ENCODE measurements at regions of chr7 and their contacts with region 1.

Region 1: DNA sequence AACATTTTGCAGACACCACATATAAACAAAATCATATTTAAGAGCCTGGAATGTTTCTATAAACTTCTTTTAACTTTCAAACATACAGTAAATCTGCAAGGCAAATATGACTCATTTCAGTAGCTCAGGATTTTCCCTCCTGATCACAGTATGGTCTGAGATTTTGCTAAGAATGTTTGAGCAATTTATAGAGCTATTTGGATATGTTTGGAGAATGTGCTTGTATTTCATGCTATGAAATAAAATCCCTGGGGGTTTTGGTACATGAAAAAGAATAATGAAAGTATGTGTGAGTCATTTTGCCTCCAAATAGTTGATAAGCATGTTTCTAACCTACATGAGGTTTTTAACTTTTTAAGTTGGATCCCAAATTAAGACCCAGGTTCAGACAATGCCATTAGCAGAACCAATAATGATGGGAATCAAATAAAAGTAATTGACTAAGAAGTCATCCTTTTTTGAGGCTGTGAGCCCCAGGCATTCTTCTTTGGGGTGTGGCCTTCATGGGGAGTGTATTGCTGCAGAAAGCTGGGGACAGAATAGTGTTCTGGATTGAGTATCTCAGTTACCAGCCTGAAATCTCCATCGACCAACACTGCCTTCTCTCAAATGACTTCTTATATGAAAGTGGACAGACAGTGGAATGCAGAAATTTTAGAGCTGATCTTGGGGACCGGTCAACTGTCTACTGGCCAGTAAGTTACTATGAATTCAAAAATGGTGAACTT is 66.1 kb upstream of the AGBL3 start:
- DNase-seq: no peak
- ATAC-seq: peak; percentile 85
- H3K4me3 Mint-ChIP-seq: no peak overlapping the region
- H3K27ac Mint-ChIP-seq: no peak overlapping the region
- H3K4me1 Mint-ChIP-seq: peaks cover 19% of the 10 kb centered on the region
- H3K27me3 Mint-ChIP-seq: no peaks in the 10 kb centered on the region

Region 2: GRCh38 chr7:134908289-134908688 is 11.9 kb before region 1 on chr7:
- CTCF ChIA-PET with region 1: interaction called, 4 read pairs
- POLR2A ChIA-PET with region 1: no interaction called
- intact Hi-C with region 1: loop called in 1 of 2 experiments (anchors 1 kb)
- DNase-seq: peak; percentile 18
- ATAC-seq: peak; percentile 97
- H3K4me3 Mint-ChIP-seq: no peak overlapping the region
- H3K27ac Mint-ChIP-seq: no peak overlapping the region
- H3K4me1 Mint-ChIP-seq: peaks cover 13% of the 10 kb centered on the region
- H3K27me3 Mint-ChIP-seq: no peaks in the 10 kb centered on the region

Region 3: DNA sequence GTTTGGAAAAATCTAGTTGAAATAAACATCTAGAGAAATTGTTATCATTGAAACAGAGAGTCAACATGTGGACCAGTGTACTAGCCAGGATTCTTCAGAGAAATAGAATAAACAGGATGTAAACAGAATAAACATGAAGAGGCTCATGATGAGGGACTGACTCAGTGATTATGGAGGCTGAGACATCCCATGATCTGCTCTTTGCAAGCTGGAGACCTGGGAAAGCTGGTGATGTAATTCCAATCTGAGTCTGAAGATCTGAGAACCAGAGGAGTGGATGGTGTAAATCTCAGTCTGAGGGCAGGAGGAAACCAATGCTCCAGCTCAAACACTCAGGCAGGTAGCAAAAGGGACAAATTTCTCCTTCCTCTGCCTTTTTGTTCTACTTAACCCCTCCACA is 891.3 kb after region 1 on chr7:
- CTCF ChIA-PET with region 1: no interaction called
- POLR2A ChIA-PET with region 1: no interaction called
- intact Hi-C with region 1: no loop called
- DNase-seq: no peak
- ATAC-seq: no peak
- H3K4me3 Mint-ChIP-seq: no peak overlapping the region
- H3K27ac Mint-ChIP-seq: no peak overlapping the region
- H3K4me1 Mint-ChIP-seq: no peaks in the 10 kb centered on the region
- H3K27me3 Mint-ChIP-seq: no peaks in the 10 kb centered on the region